ENCODE measurements at regions of chr1 and their contacts with region 1.

Region 1: DNA sequence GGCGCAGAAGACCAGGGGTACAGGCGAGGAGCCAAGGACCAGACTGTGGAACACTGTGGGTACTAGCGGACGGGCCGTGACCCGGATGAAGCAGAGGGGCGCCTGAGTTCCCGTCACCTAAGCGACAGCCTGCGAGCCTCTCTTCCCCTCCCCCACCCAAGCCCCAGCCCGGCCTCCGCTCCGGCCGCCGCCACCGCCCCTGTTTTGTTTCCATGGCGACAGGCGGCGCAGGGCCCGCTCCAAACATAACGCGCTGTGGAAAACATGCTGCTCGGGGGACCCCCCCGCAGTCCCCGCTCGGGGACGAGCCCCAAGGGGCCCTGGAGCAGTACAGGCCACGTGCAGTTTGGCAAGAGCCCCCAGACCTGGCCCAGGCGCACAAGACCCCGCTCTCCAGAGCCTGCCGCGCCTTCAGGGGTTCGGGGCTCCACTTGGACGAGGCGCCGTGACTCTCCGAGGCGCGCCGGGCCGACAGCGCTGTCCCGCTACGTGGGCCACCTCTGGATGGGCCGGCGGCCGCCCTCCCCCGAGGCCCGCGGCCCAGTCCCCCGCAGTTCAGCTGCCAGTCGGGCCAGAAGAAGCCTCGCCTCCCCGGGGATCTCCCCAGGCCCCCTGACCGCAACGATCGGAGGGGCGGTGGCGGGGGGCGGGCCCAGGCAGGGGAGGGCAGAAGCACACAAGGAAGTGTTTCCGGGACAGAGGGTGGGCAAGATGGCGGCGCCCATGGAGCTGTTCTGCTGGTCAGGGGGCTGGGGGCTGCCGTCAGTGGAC is at the start of gene MTX1:
- DNase-seq: peak; percentile 89
- H3K4me3 ChIP-seq: peak within 1 kb of the TSS; percentile 71 to 92 (median 84)
- H3K27ac ChIP-seq: peak within 1 kb of the TSS; percentile 96 to 99 (median 98)
- H3K4me1 ChIP-seq: peaks cover 24 to 29% (median 26%) of the 10 kb centered on the region in 4 donors
- H3K27me3 ChIP-seq: no peaks in the 10 kb centered on the region
- CTCF ChIP-seq: no peak
- EP300 ChIP-seq: peak; percentile 45
- POLR2A ChIP-seq: peak; percentile 66
- total RNA-seq, gene MTX1: 24.3 to 64.0 (median 46.0) TPM

Region 2: GRCh38 chr1:155227261-155228095 is 18.8 kb after region 1 on chr1:
- in situ Hi-C with region 1: no loop called
- intact Hi-C with region 1: loop called (anchors 2 kb)
- DNase-seq: peak; percentile 99
- H3K4me3 ChIP-seq: peak overlapping the region; percentile 43 to 81 (median 48)
- H3K27ac ChIP-seq: peak overlapping the region; percentile 88 to 95 (median 92)
- H3K4me1 ChIP-seq: peaks cover 5 to 27% (median 10%) of the 10 kb centered on the region in 4 donors
- H3K27me3 ChIP-seq: no peaks in the 10 kb centered on the region
- CTCF ChIP-seq: no peak
- EP300 ChIP-seq: no peak
- POLR2A ChIP-seq: peak; percentile 76

Region 3: GRCh38 chr1:155379631-155380090 is 170.9 kb after region 1 on chr1:
- in situ Hi-C with region 1: no loop called
- intact Hi-C with region 1: no loop called
- DNase-seq: no peak
- H3K4me3 ChIP-seq: no peak overlapping the region
- H3K27ac ChIP-seq: peak overlapping the region in 2 of 4 donors; percentile 1 to 43
- H3K4me1 ChIP-seq: no peaks in the 10 kb centered on the region
- H3K27me3 ChIP-seq: no peaks in the 10 kb centered on the region
- CTCF ChIP-seq: no peak
- EP300 ChIP-seq: no peak
- POLR2A ChIP-seq: no peak

Region 4: DNA sequence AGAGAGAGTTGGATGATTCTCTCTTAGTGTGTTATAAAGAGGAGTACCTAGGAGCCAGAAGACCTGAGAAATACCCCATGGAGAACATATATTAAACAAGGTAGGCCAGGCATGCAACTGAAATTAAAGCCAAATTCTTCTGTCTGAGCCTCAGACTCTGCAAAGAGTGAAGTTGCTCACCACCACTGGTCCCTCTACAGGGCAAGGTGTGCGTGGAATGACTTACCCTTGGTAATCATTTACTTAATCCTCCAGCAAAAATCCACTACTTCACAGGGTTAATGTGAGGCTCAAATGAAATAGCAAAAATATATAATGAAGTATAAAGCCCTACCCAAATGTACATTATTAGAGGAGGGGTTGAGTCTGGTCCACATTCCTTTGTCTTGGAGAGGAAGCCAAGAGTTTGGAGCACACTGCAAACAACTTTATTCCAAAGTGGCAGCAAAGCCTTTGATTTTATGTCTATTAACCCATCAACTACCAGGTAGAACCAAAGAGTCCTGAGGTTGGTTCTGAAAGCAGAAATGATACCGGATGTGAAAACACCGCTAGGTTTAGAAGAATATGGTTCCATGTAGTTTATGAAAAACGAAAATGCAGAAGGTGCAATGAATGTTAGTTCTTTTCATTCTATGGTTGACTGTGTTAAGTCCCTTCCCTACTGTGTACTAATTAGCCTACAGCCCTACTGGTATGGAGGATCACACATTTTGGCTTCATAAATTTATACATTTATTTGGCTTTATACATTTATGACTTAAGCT is 803.5 kb after region 1 on chr1:
- in situ Hi-C with region 1: no loop called
- intact Hi-C with region 1: no loop called
- DNase-seq: no peak
- H3K4me3 ChIP-seq: no peak overlapping the region
- H3K27ac ChIP-seq: no peak overlapping the region
- H3K4me1 ChIP-seq: no peaks in the 10 kb centered on the region
- H3K27me3 ChIP-seq: no peaks in the 10 kb centered on the region
- CTCF ChIP-seq: no peak
- EP300 ChIP-seq: no peak
- POLR2A ChIP-seq: no peak

Measured in transverse colon (tissue), 4 donors.